ENCODE measurements at regions of chr5 and their contacts with region 1.

Region 1: DNA sequence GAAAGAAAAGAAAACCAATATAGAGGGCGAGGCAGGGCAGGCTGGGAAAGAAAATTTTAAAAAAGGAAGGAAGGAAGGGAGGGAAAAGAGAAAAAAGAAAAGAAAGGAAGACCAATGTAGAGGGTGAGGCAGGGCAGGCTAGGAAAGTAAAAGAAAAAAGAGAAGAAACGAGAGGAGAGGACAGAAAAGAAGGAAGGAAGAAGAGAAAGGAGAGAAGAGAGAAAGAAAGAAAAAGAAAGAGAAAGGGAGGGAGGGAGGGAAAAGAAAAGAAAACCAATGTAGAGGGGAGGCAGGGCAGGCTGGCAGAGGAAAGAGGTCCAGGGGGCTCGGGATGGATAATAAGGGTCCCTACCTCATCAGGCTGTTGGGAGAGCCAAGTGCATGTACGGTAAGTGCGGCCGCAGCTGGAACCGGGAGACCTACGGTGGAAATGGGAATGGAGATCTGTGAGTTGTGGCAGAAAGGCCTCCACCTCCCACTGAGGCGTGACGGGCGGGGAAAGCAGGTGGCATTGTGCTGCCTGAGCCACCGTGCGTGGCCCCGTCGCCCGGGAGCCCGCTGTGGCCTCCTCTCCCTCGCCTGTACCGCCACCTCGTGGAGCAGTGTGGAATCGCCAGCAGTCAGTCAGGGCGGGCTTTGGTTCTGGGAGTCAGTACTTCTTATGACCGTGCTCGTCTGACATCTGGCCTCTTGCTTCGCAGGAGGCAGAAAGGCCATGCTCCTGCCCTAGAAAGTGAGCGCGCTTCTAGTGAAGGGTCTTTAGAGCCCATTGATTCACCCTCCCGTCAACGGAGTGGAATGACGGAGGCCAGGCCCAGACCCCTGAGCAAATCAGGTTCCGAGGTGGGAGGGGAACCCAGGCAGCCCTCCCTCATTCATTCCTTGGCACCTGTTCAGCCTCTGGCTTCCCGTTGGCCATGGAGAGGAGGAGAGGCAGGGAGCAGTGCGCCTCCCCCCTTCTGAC is 10.4 kb upstream of the NHP2 start:
- DNase-seq: peak; percentile 93
- ATAC-seq: peak; percentile 99
- H3K4me3 Mint-ChIP-seq: peak overlapping the region; percentile 6
- H3K27ac Mint-ChIP-seq: no peak overlapping the region
- H3K4me1 Mint-ChIP-seq: peaks cover 10% of the 10 kb centered on the region
- H3K27me3 Mint-ChIP-seq: peaks cover 12% of the 10 kb centered on the region

Region 2: GRCh38 chr5:178153573-178154343 is 10.3 kb before region 1 on chr5 and contains the start of gene NHP2:
- CTCF ChIA-PET with region 1: interaction called, 12 read pairs
- POLR2A ChIA-PET with region 1: interaction called, 4 read pairs
- DNase-seq: peak; percentile 99
- ATAC-seq: peak; percentile 99
- H3K4me3 Mint-ChIP-seq: peak within 1 kb of the TSS; percentile 98
- H3K27ac Mint-ChIP-seq: peak within 1 kb of the TSS; percentile 93
- H3K4me1 Mint-ChIP-seq: peaks cover 43% of the 10 kb centered on the region
- H3K27me3 Mint-ChIP-seq: no peaks in the 10 kb centered on the region
- total RNA-seq, gene NHP2: 176 to 184 TPM

Measured in activated CD8-positive, alpha-beta T cell treated with anti-CD3 and anti-CD28 coated beads, Interleukin-2, amount 10 ng/mL, durations not matched to agents 7 days and 5 days (primary cell).